PC-9 (cell line): ENCODE measurements at regions of chr6 and their contacts with region 1.

Region 1: DNA sequence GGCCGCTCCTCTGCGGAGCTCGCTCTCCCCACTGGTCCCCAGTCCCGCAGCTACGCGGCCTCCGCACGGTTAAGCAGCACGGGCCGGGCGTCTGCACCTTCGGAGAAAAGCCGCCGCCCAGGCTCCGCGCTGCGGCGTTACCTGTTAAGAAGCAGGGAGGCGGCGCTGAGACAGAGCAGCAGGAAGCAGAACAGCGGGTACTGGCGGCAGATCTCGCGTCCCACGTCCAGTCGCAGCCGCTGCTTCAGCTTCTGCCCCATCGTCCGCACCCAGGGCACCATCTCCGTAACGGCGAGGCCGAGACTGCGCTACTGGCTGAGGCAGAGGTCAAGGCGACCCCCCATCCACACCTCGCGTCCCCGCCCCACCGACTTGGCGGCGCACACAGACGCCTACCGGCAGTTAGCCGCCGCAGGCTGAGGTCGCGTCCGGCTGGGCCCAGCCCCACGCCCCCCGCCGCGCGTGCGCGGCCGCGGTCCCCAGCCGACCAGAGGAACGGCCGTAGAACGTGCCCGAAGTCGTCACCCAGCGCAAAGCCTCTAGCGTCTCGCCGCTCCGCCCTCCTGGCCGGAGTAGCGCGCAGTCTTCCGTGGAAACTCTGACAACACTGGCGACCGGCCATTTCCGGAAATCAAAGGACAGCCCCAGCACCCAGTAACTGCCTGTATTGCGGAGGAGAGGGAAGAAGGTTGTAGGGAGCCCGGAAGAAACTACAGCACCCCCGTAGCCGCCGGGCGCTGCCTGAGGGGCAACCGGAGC is at the start of gene SNX14:
- DNase-seq: peak; percentile 85 to 92
- H3K4me3 ChIP-seq: peak within 1 kb of the TSS; percentile 84
- H3K27ac ChIP-seq: peak within 1 kb of the TSS; percentile 76
- H3K4me1 ChIP-seq: peaks cover 34% of the 10 kb centered on the region
- H3K27me3 ChIP-seq: no peaks in the 10 kb centered on the region
- CTCF ChIP-seq: no peak
- total RNA-seq, gene SNX14: 92.0 and 99.1 TPM in 2 replicates

Region 2: DNA sequence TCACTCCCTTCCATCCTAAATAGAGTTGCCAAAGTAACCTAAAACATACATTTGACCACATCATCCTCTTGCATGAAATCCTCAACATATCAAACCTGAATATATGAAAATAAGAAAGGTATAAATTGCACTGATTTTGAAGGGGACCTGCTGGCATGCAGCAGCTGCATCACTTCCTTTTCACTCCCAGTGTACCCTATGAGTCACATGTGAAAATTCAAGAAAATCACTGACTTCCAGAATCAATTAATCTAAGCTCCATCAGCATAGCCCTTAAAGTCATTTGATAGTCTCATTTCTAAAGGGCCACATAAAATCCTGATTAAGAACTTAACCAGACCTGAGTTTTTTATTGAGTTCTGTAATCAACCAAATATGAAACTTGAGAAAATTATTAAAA is 24.3 kb before region 1 on chr6:
- CTCF ChIA-PET with region 1: no interaction called
- POLR2A ChIA-PET with region 1: no interaction called
- intact Hi-C with region 1: no loop called
- DNase-seq: no peak
- H3K4me3 ChIP-seq: no peak overlapping the region
- H3K27ac ChIP-seq: no peak overlapping the region
- H3K4me1 ChIP-seq: no peaks in the 10 kb centered on the region
- H3K27me3 ChIP-seq: no peaks in the 10 kb centered on the region
- CTCF ChIP-seq: no peak

Region 3: DNA sequence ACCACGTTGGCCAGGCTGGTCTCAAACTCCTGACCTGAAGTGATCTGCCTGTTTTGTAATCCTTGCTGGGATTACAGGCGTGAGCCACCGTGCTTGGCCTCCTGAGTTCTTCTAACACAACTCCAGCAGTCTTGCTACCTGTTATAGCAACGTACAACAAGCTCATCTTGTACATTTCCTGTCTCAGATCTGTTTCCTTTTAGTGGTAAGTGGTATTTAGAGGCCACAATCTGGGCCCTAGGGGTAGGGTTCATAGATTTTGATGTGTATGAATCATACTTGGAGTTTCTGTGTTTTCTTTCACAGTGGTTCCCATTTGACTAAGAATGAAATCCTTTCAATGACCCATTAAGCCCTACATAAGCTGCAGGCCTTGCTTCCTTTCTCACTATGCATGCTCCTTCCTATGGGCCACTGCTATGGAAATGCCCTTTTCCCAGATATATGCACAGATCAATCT is 76.1 kb after region 1 on chr6:
- CTCF ChIA-PET with region 1: no interaction called
- POLR2A ChIA-PET with region 1: interaction called, 19 read pairs
- intact Hi-C with region 1: no loop called
- DNase-seq: peak in 1 of 2 experiments; percentile 52
- H3K4me3 ChIP-seq: no peak overlapping the region
- H3K27ac ChIP-seq: peak overlapping the region; percentile 29; the same call in 1 of the 2 replicates
- H3K4me1 ChIP-seq: no peaks in the 10 kb centered on the region
- H3K27me3 ChIP-seq: no peaks in the 10 kb centered on the region
- CTCF ChIP-seq: no peak

Region 4: GRCh38 chr6:85678602-85679444 is 85.2 kb after region 1 on chr6:
- CTCF ChIA-PET with region 1: no interaction called
- POLR2A ChIA-PET with region 1: no interaction called
- intact Hi-C with region 1: loop called (anchors 2 kb)
- DNase-seq: peak; percentile 86 to 96
- H3K4me3 ChIP-seq: peak overlapping the region; percentile 95
- H3K27ac ChIP-seq: peak overlapping the region; percentile 77
- H3K4me1 ChIP-seq: peaks cover 17% of the 10 kb centered on the region
- H3K27me3 ChIP-seq: no peaks in the 10 kb centered on the region
- CTCF ChIP-seq: no peak